ENCODE measurements at regions of chr3 and their contacts with region 1.

Region 1: DNA sequence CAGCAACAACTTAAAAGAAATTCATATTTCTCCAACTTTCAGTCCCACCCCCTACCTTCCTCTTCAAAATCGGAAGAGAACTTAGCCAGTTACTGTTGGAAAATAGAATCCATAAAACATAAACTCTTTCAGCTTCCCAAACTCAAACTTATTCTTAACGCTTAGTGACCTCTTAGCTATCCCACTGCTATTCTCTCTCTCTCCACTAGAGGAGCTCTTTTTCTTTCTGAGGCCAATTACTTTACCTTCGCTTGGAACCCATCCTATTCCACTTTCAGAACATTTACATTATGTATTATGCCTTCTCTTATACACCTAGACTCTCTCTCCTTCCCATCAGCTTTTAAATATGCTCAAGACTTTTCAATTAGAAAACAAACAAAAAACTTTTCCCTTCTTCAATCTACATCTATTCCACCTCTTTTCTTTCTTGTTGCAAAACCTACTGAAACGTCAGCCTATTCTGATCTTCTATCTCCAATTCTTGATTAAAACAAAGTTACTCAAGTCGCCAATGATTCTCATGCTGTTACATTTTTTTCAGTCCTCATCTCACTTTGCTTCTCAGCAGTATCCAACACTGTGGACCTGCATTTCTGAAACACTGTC is 13.4 kb upstream of the GHSR start:
- DNase-seq: no peak
- H3K4me3 Mint-ChIP-seq: no peak overlapping the region
- H3K27ac Mint-ChIP-seq: no peak overlapping the region
- H3K4me1 Mint-ChIP-seq: no peaks in the 10 kb centered on the region
- H3K27me3 Mint-ChIP-seq: no peaks in the 10 kb centered on the region

Region 2: GRCh38 chr3:172476347-172476746 is 14.7 kb after region 1 on chr3:
- CTCF ChIA-PET with region 1: interaction called, 28 read pairs
- POLR2A ChIA-PET with region 1: no interaction called
- intact Hi-C with region 1: no loop called
- DNase-seq: no peak
- H3K4me3 Mint-ChIP-seq: peak overlapping the region; percentile 30
- H3K27ac Mint-ChIP-seq: no peak overlapping the region
- H3K4me1 Mint-ChIP-seq: peaks cover 17% of the 10 kb centered on the region
- H3K27me3 Mint-ChIP-seq: no peaks in the 10 kb centered on the region

Region 3: GRCh38 chr3:172622916-172623700 is 161.5 kb after region 1 on chr3:
- CTCF ChIA-PET with region 1: interaction called, 13 read pairs
- POLR2A ChIA-PET with region 1: no interaction called
- intact Hi-C with region 1: no loop called
- DNase-seq: peak; percentile 44
- H3K4me3 Mint-ChIP-seq: no peak overlapping the region
- H3K27ac Mint-ChIP-seq: no peak overlapping the region
- H3K4me1 Mint-ChIP-seq: peaks cover 9% of the 10 kb centered on the region
- H3K27me3 Mint-ChIP-seq: no peaks in the 10 kb centered on the region

Region 4: DNA sequence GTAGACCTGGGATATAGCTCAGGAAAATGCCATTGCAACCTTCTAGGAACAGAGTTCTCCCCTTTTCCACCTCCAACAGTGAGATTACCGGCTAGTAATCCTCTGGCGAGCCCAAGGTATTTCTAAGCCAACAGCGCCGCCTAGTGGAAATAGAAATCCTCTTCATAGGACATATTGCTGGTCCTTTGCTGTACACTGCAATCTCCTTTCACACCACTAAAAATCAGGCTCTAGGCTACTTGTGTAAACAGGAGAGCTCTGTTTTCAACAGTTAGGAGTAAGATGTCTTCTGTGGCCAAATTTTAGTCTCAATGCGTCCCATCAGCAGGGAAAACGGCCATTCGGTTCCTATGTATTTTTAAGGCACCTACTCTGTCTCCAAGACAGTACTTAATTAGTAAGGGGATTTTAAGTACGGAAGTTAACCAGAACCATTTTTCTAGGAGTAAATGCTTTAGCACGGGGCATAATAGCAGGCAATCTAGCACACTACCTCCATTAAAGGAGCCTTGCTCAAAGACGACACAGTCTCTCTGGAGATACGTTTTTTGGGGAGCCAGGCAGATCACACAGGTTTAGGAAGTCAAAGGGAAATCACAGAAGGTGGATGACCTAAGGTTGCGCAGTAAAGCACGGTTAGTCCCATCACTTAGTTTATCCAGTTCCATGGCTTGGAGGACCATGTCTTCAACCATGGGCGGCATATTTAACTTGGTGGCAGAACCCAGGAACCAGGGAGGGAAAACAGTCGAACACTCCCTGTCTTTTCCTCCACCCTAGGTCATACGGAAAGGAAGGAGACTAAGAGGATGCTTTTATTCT is 205.4 kb after region 1 on chr3:
- CTCF ChIA-PET with region 1: interaction called, 19 read pairs
- POLR2A ChIA-PET with region 1: no interaction called
- intact Hi-C with region 1: no loop called
- DNase-seq: peak; percentile 82
- H3K4me3 Mint-ChIP-seq: no peak overlapping the region
- H3K27ac Mint-ChIP-seq: no peak overlapping the region
- H3K4me1 Mint-ChIP-seq: peaks cover 14% of the 10 kb centered on the region
- H3K27me3 Mint-ChIP-seq: no peaks in the 10 kb centered on the region

Region 5: DNA sequence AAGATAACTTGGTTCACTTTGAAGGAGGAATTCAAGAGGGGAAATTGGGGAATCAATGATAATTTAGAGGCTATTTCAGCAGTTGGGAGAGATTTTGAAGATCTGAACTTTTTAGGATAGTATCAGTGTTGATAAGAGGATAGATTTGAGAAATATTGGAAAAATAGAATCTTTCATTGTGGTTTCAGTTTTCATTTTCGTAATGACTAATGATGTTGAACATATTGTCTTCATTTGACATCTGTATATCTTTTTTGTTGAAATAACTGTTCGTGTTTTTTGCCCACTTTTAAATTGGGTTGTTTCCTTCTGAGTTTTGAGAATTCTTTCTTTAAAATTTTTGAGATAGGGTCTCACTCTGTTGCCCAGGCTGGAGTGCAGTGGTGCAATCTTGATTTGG is 310.0 kb after region 1 on chr3:
- CTCF ChIA-PET with region 1: no interaction called
- POLR2A ChIA-PET with region 1: no interaction called
- intact Hi-C with region 1: no loop called
- DNase-seq: no peak
- H3K4me3 Mint-ChIP-seq: no peak overlapping the region
- H3K27ac Mint-ChIP-seq: no peak overlapping the region
- H3K4me1 Mint-ChIP-seq: peaks cover 6% of the 10 kb centered on the region
- H3K27me3 Mint-ChIP-seq: no peaks in the 10 kb centered on the region